Heart right ventricle (tissue), 16 donors: ENCODE measurements at regions of chr5 and their contacts with region 1.

Region 1: DNA sequence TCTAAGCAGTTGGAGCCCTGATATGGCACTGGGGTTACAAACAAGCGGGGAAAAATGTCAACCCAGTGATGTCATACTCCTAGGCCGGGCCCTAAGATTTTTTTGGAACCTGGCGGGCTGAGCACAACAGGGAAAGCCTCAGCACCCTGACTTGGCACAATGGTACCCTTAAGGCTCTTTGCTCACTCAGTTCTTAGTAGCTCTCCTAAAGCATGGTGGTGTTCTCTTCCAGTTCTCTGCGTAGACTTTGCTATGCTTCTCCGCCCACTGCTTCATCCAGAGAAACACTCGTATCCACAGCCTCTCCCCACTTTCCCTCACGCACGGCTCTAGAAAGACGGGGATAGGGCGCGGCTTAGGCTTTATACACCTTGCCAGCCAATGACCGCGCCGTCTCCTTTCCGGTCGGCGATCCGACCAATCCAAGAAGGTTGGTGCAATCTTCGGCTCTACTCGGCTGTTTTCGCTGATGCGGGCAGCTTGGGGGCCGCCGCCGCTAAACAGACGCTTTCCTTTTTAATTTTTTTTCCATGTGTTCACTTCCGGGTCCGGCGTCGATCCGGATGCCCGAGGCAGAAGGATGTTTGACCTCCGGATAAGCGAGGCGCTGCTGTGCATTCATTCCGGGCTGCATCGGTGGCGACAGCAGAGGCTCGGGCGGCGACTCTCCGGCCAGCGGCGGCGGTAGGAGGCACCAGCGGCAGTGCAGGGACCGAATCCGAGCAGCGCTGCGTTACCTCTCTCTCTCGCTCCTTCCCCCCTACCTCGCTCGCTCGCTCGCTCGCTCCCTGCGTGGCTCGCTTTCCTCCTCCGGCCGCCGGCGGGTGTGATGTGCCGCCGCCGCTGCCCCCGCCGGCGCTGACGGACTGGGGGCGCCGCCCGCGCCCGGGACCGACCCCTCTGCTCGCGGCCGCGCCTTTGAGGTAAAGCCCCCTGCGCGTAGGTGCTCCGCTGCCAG is at the start of gene CSNK1G3:
- DNase-seq: peak; percentile 93 to 98
- ATAC-seq: peak; percentile 98 to 100 (median 99)
- H3K4me3 ChIP-seq: peak within 1 kb of the TSS; percentile 66 to 93 (median 78)
- H3K27ac ChIP-seq: peak within 1 kb of the TSS; percentile 83 to 97 (median 95)
- H3K4me1 ChIP-seq: peaks cover 0 to 32% (median 16%) of the 10 kb centered on the region in 9 donors
- H3K27me3 ChIP-seq: no peaks in the 10 kb centered on the region
- CTCF ChIP-seq: peak in 1 of 9 donors; percentile 28
- total RNA-seq, gene CSNK1G3: 19.7 to 30.9 (median 25.7) TPM

Region 2: GRCh38 chr5:123423278-123424149 is 88.4 kb before region 1 on chr5 and contains the start of gene CEP120:
- intact Hi-C with region 1: loop called in 7 of 10 experiments (anchors 1 to 10 kb)
- DNase-seq: peak; percentile 98
- ATAC-seq: peak; percentile 99 to 100 (median 100)
- H3K4me3 ChIP-seq: peak within 1 kb of the TSS; percentile 69 to 97 (median 90)
- H3K27ac ChIP-seq: peak within 1 kb of the TSS; percentile 66 to 96 (median 90)
- H3K4me1 ChIP-seq: peaks cover 0 to 40% (median 18%) of the 10 kb centered on the region in 9 donors
- H3K27me3 ChIP-seq: no peaks in the 10 kb centered on the region
- CTCF ChIP-seq: peak; percentile 55 to 95 (median 81)
- total RNA-seq, gene CEP120: 7.1 to 14.9 (median 11.3) TPM

Region 3: GRCh38 chr5:123571927-123572326 is 60.0 kb after region 1 on chr5:
- intact Hi-C with region 1: loop called in 2 of 10 experiments (anchors 5 to 10 kb)
- DNase-seq: no peak
- ATAC-seq: no peak
- H3K4me3 ChIP-seq: no peak overlapping the region
- H3K27ac ChIP-seq: no peak overlapping the region
- H3K4me1 ChIP-seq: no peaks in the 10 kb centered on the region
- H3K27me3 ChIP-seq: no peaks in the 10 kb centered on the region
- CTCF ChIP-seq: no peak

Region 4: DNA sequence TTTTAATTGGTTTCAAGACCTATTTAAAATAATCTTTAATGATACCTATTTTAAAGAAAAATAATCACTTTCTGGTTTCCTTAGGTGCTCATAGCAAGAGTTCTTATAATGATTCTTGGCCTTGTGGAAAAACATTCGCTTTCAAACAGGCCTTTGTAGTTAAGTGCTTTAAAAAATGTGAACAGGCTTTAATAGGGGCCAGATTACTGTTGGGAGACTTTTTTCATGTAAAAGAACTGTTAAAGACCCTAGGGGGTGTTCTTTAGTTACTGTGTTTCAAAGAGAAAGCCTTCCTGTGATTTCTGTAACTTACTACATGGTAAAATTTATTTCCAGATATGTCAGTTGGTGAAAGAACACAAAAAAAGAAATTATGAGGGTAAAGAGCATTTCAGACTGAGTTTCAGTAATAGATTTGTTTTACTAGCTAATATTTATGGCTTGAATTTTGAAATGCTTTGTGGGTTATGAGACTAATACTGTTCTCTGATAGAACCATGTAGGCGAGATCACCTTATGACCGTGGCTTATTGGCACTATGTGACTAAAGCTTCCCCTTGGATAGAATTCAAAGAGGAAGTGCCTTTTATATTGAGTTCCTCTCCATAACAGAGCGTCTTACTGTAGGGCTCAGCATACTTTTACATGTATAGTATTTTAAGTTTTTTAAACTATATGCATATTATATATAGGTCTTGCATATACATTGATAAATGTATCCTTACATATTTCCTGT is 70.8 kb after region 1 on chr5:
- intact Hi-C with region 1: loop called in 3 of 10 experiments (anchors 5 to 10 kb)
- DNase-seq: no peak
- ATAC-seq: peak in 6 of 8 donors; percentile 46 to 70 (median 60)
- H3K4me3 ChIP-seq: no peak overlapping the region
- H3K27ac ChIP-seq: peak overlapping the region in 3 of 10 donors; percentile 18 to 39 (median 24)
- H3K4me1 ChIP-seq: peaks cover 0 to 28% (median 7%) of the 10 kb centered on the region in 9 donors
- H3K27me3 ChIP-seq: no peaks in the 10 kb centered on the region
- CTCF ChIP-seq: no peak

Region 5: DNA sequence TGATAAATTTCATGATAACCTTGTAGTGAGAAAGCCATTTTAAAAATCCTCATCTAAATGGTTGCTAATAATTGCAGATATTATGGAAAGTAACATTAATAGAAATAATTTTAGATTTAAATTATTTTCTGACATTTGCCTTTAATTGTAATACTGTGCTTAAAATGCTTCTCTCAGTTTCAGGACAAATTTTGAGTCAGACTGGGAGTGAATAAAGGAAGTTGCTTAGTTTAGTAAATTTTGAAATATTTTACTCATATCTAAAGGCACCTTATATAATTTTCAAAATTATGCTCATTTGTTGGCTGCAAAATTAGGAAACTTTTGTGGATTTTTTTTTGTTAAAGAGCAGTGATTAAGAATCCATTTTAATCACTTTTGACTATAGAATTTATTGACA is 93.9 kb after region 1 on chr5:
- intact Hi-C with region 1: loop called in 4 of 10 experiments (anchors 2 to 5 kb)
- DNase-seq: no peak
- ATAC-seq: no peak
- H3K4me3 ChIP-seq: no peak overlapping the region
- H3K27ac ChIP-seq: no peak overlapping the region
- H3K4me1 ChIP-seq: peaks cover 0 to 12% (median 0%) of the 10 kb centered on the region in 9 donors
- H3K27me3 ChIP-seq: no peaks in the 10 kb centered on the region
- CTCF ChIP-seq: no peak

Region 6: GRCh38 chr5:123610665-123611405 is 98.9 kb after region 1 on chr5:
- intact Hi-C with region 1: loop called in 4 of 10 experiments (anchors 2 to 5 kb)
- DNase-seq: peak in 1 of 2 donors; percentile 29
- ATAC-seq: peak in 5 of 8 donors; percentile 49 to 69 (median 61)
- H3K4me3 ChIP-seq: no peak overlapping the region
- H3K27ac ChIP-seq: peak overlapping the region in 1 of 10 donors; percentile 24
- H3K4me1 ChIP-seq: peaks cover 0 to 18% (median 0%) of the 10 kb centered on the region in 9 donors
- H3K27me3 ChIP-seq: no peaks in the 10 kb centered on the region
- CTCF ChIP-seq: peak; percentile 89 to 99 (median 94)